PC-3 (cell line): ENCODE measurements at regions of chr10 and their contacts with region 1.

Region 1: GRCh38 chr10:77773631-77774426 is 136.2 kb upstream of the KCNMA1 start:
- DNase-seq: no peak
- ATAC-seq: no peak
- H3K4me3 ChIP-seq: no peak overlapping the region
- H3K27ac ChIP-seq: no peak overlapping the region
- H3K4me1 ChIP-seq: no peaks in the 10 kb centered on the region
- H3K27me3 ChIP-seq: no peaks in the 10 kb centered on the region
- CTCF ChIP-seq: no peak

Region 2: GRCh38 chr10:76229341-76229740 is 1544.5 kb before region 1 on chr10:
- CTCF ChIA-PET with region 1: no interaction called
- POLR2A ChIA-PET with region 1: interaction called, 38 read pairs
- intact Hi-C with region 1: no loop called
- DNase-seq: no peak
- ATAC-seq: no peak
- H3K4me3 ChIP-seq: no peak overlapping the region
- H3K27ac ChIP-seq: no peak overlapping the region
- H3K4me1 ChIP-seq: no peaks in the 10 kb centered on the region
- H3K27me3 ChIP-seq: peaks cover 52% of the 10 kb centered on the region
- CTCF ChIP-seq: no peak

Region 3: GRCh38 chr10:77710759-77711682 is 62.8 kb before region 1 on chr10:
- CTCF ChIA-PET with region 1: no interaction called
- POLR2A ChIA-PET with region 1: no interaction called
- intact Hi-C with region 1: no loop called
- DNase-seq: peak; percentile 97
- ATAC-seq: peak; percentile 98
- H3K4me3 ChIP-seq: peak overlapping the region; percentile 57
- H3K27ac ChIP-seq: no peak overlapping the region
- H3K4me1 ChIP-seq: peaks cover 10% of the 10 kb centered on the region; the same call in 1 of the 2 replicates
- H3K27me3 ChIP-seq: no peaks in the 10 kb centered on the region
- CTCF ChIP-seq: peak; percentile 100

Region 4: GRCh38 chr10:77799352-77799751 is 25.5 kb after region 1 on chr10:
- CTCF ChIA-PET with region 1: no interaction called
- POLR2A ChIA-PET with region 1: no interaction called
- intact Hi-C with region 1: no loop called
- DNase-seq: no peak
- ATAC-seq: no peak
- H3K4me3 ChIP-seq: no peak overlapping the region
- H3K27ac ChIP-seq: no peak overlapping the region
- H3K4me1 ChIP-seq: 0 out of 2 replicates have a peak, but pooled peaks cover 6% of the 10 kb centered on the region
- H3K27me3 ChIP-seq: no peaks in the 10 kb centered on the region
- CTCF ChIP-seq: no peak